ENCODE measurements at regions of chr1 and their contacts with region 1.

Region 1: DNA sequence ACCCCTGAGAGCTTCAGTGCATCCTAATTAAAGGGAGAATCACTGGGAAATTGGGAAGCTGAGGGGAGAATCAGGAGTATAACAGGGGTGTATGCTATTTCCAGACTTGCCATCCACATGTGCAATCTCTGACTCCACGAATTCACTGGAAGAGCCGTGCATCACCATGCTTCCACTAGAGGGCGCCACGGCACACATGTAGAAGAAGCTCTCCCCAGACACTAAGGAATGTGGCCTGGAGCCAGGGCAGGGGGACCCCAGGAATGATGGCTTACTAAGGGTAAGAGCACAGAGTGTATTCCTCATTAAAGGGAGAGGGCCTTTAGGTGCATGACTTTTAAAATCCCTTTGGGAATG is 81.5 kb downstream of the ABCA4 start:
- DNase-seq: peak; percentile 74
- H3K4me3 ChIP-seq: no peak overlapping the region; a peak in 1 of 4 replicates
- H3K27ac ChIP-seq: peak overlapping the region; percentile 55 to 72; a peak in 3 of 4 replicates
- H3K4me1 ChIP-seq: peaks cover 17 to 23% of the 10 kb centered on the region in 2 experiments; a peak in 3 of 4 replicates
- H3K27me3 ChIP-seq: no peaks in the 10 kb centered on the region
- CTCF ChIP-seq: peak; percentile 97
- EP300 ChIP-seq: no peak
- RAD21 ChIP-seq: peak; percentile 66

Region 2: GRCh38 chr1:94012686-94013624 is 26.5 kb before region 1 on chr1:
- CTCF ChIA-PET with region 1: interaction called, 11 read pairs
- POLR2A ChIA-PET with region 1: no interaction called
- DNase-seq: no peak
- H3K4me3 ChIP-seq: no peak overlapping the region
- H3K27ac ChIP-seq: no peak overlapping the region
- H3K4me1 ChIP-seq: peaks cover 0 to 9% of the 10 kb centered on the region in 2 experiments; a peak in 1 of 4 replicates
- H3K27me3 ChIP-seq: no peaks in the 10 kb centered on the region
- CTCF ChIP-seq: no peak
- EP300 ChIP-seq: no peak
- RAD21 ChIP-seq: no peak

Region 3: GRCh38 chr1:94228640-94229375 is 189.3 kb after region 1 on chr1:
- CTCF ChIA-PET with region 1: interaction called, 27 read pairs
- POLR2A ChIA-PET with region 1: no interaction called
- DNase-seq: no peak
- H3K4me3 ChIP-seq: no peak overlapping the region
- H3K27ac ChIP-seq: no peak overlapping the region
- H3K4me1 ChIP-seq: peaks cover 0 to 17% of the 10 kb centered on the region in 2 experiments; a peak in 2 of 4 replicates
- H3K27me3 ChIP-seq: no peaks in the 10 kb centered on the region
- CTCF ChIP-seq: no peak
- EP300 ChIP-seq: no peak
- RAD21 ChIP-seq: no peak

Region 4: DNA sequence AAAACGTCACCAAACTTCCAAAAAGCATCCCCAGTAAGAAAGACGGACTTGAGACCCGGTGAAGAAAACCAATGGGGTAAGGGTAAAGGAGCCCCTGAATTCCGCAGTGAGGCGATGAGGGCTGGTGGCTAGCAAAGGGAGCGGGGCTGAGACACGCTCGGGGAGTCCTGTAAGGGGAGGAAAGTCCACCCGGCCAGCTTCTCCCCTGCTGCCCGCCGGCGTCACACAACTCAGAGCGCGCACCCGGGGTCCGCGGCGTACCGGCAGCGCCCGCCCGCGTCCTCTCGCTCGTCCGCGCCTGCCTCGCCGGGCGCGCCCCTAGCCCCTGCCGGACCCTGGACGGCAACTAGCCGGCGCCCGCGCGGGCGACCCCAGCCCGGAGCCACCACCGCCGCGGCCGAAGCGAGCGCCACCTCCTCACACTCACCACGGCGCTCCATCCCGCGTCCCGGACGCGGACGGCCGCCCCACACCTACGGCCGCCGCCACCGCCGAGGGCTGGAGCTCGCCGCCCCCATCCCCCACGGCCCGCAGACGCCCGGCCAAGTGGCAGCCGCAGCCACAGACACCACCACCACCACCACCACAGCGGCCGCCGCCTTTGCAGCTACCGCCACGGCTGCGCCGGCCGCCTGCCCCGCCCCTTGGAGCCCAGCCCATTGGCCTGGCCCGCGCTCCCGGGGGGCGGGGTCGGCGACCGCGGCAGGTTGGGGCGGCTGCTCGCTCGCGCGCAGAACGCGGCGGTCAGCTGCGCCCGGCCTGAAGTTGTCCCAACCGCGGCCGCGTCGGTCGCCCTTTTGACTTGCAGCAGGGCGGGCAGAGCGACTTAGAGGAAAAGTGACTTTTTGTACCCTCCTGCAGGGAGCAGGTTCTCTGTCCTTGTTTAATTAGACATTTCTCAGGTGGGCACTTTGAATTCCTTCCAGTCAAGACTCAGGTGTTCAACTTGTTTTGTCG is 207.9 kb after region 1 on chr1:
- CTCF ChIA-PET with region 1: interaction called, 18 read pairs
- POLR2A ChIA-PET with region 1: no interaction called
- DNase-seq: peak; percentile 96
- H3K4me3 ChIP-seq: peak overlapping the region; percentile 59 to 80
- H3K27ac ChIP-seq: no peak overlapping the region; a peak in 1 of 4 replicates
- H3K4me1 ChIP-seq: peaks cover 0 to 9% of the 10 kb centered on the region in 2 experiments; a peak in 2 of 4 replicates
- H3K27me3 ChIP-seq: no peaks in the 10 kb centered on the region
- CTCF ChIP-seq: no peak
- EP300 ChIP-seq: no peak
- RAD21 ChIP-seq: no peak; the same call in 1 of the 2 replicates

Measured in SK-N-SH (cell line).